ENCODE measurements at regions of chr20 and their contacts with region 1.

Region 1: DNA sequence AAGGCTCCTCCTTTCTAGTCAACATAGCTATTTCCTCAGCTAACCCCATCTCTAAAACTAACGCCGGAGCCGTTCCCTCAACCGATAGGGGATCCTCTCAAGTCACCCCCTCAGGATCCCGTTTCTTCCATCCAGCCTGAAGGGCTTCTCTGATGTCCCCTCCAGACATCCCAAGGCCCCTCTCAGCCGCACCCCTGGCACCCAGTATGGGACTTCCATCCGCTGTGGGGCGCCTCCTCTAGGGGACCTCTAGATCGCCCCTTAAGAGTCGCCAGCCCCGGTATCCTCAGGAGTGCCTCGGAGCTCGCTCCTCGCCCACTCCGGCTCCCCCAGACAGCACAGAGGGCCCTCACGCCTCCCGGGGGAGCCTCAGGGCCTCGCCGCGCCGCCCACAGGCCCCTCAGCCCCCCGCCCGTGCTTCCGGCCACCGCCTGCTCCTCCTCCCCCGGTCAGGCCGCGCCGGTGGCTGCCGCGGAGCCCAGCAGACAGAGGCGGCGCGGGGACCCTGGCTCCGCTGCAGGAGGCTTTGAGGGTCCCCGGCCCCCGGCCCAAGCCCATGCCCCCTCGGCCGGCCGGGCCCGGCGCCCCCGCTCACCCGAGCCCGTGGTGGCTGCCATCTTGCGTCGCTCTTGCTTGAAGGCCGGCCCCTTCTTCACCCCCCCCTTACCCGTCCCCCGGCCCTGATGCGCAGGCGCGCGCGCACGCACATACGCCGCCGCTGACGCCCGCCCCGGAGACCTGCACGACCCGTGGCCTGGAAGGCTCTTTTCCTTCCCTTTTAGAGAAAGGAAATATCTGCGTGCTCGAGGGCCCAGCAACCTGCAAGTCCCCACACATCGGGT is at the start of gene UBE2V1:
- DNase-seq: peak; percentile 77 to 96 (median 91)

Region 2: DNA sequence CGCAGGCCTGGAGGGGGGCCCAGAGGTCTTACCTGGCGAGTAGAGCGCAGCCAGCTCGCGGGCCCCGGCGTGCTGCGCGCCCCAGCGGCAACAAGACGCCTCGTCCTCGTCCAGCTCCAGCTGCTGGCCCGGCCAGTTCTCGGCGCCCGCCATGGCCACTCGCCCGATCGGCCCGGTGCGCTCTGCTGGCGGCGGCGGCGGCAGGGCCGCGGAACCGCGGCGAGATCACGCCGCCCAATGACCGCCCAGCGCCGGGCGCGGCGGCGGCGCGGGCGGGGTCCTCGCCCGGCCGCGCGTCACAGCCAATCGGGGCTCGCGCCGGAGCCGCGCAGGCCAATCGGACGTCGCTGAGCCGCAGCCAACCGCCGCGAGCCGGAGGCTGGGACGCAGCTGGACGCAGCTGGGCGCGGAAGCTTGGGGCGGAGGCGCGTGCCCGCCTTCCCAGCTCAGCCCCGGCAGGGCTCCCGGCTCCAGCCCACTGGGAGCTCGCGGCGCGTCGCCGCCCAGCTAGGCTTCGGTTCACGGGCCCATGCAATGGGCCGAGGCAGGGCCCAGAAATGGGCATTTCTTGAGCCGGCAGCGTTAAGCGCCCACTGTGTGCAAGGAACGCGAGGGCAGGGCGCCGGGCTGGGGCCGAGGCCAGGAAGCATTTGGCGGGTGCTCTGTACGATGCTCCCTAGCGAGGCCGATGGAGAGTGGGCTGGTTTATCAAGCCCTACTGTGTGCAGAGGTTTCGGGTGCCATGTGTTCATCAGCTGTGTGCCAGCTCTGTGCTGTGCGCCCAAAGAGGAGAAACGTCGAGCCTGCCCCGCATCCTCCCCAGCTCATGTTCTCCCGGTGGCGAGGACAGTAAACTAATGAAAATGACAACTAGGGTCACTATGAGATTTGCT is 41.0 kb after region 1 on chr20 and contains the start of gene PEDS1:
- intact Hi-C with region 1: loop called (anchors 5 kb)
- DNase-seq: peak; percentile 65 to 96 (median 92)

Region 3: GRCh38 chr20:50267041-50267865 is 154.5 kb after region 1 on chr20:
- intact Hi-C with region 1: no loop called
- DNase-seq: peak in 1 of 42 donors; percentile 20

Measured in head of caudate nucleus (tissue), 42 donors.